ENCODE measurements at regions of chr1 and their contacts with region 1.

Region 1: GRCh38 chr1:39776400-39776713 is 5.2 kb upstream of the OXCT2 start:
- DNase-seq: no peak
- ATAC-seq: no peak
- H3K4me3 Mint-ChIP-seq: no peak overlapping the region
- H3K27ac Mint-ChIP-seq: no peak overlapping the region
- H3K4me1 Mint-ChIP-seq: no peaks in the 10 kb centered on the region
- H3K27me3 Mint-ChIP-seq: no peaks in the 10 kb centered on the region

Region 2: DNA sequence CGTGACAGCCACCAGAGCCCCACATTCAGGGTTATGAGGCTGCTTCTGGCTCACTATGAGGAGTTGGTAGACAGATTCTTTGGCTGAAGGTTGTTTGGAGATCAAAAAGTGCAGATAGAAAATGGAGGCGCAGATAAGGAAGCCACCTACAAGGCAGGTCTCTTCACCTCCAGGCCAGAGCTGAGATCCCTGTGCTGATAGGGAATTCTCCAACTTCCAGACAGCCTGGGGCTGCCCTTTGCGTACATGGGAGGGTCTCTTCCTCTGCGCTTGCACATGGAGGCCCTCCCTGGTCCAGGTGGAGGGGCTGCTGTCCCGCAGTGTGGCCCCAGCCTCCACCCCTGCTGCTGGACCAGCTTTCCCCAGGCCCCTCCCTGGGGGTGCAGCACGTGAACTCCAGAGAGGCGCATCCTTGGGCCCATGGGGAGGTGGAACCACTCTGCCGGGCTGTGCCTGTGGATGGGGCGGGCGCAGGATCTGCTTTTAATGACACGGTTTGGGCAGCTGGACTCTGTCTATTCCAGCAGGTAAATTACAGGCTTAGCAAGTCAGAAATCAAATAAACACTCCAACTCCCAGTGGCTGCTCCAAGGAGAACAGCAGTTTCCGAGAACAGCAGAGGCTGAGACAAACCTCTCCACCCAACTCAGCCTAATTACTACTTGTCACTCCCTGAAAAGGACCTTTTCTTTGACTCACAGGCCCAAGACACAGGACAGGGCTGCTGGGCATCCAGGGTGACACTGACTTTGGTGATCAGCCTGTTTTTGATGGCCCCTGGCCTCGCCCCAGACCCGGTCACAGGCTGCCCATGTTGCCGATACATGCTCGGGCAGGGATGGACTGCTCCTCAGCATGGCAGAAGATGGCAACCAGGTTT is 17.6 kb before region 1 on chr1:
- CTCF ChIA-PET with region 1: no interaction called
- POLR2A ChIA-PET with region 1: no interaction called
- intact Hi-C with region 1: loop called in 1 of 2 experiments (anchors 2 kb)
- DNase-seq: no peak
- ATAC-seq: no peak
- H3K4me3 Mint-ChIP-seq: no peak overlapping the region
- H3K27ac Mint-ChIP-seq: no peak overlapping the region
- H3K4me1 Mint-ChIP-seq: no peaks in the 10 kb centered on the region
- H3K27me3 Mint-ChIP-seq: no peaks in the 10 kb centered on the region

Region 3: DNA sequence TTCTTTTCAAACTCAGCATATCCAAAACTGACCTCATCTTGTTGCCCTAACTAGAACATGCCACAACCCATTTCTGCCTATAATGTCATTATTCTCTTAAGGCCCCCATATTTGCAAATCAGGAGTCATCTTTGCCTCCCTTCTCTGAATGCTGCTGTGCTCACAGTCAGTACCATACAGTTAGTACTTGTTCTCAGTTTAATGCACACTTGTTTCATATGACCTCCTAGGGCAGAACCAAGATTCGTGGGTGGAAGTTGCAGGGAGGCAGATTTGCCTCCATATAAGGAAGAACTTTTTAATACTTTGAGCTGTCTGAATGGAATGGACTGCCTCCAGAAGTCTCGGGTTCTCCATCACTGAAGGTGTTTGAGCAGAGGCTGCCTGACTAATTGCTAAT is 273.4 kb after region 1 on chr1:
- CTCF ChIA-PET with region 1: no interaction called
- POLR2A ChIA-PET with region 1: no interaction called
- intact Hi-C with region 1: no loop called
- DNase-seq: peak; percentile 48
- ATAC-seq: peak; percentile 77
- H3K4me3 Mint-ChIP-seq: peak overlapping the region; percentile 57
- H3K27ac Mint-ChIP-seq: peak overlapping the region; percentile 95
- H3K4me1 Mint-ChIP-seq: peaks cover 84% of the 10 kb centered on the region
- H3K27me3 Mint-ChIP-seq: no peaks in the 10 kb centered on the region